B cell (primary cell): ENCODE measurements at regions of chrX and their contacts with region 1.

Region 1: DNA sequence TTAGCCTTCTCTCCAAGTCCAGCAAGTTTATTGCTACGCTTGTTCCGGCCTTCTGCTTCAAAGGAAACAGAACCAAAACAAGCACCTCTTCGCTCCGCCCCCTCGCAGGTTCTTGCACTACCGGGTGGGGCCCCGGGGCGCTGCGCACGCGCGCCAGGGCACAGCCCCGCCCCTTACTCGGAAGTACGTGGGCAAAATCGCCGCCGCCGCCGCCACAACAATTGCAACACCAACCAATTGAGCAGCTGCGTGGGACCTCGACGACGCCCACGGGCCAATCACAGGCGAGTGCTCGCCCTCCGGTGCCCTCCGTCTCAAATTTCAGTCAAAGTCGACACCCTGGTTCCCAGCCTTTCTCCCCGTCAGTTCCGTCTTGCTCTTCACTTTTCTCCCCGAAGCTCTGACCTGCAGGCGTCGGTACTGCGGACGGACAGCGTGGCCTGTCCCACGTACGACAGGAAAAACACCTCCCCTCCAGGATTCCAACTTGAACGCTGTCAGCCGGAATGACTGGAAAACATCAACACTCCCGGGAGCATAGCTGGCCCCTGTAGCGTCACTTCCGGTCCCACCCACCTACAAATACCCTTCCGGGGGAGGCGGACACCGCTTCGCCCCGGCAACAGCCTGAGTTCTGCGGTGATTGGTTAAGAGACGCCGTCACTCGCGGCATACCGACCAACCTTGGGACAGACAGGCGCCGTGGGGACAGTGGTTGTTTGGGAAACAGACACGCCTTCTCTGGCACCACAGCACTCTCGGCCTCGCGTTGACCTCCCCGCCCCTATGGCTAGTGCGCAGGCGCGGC is 624 bp upstream of the OTUD5 start:
- DNase-seq: peak; percentile 96
- ATAC-seq: peak; percentile 81
- H3K4me3 ChIP-seq: peak overlapping the region; percentile 8 to 75 (median 65)
- H3K4me3 Mint-ChIP-seq: peak overlapping the region; percentile 100
- H3K27ac ChIP-seq: peak overlapping the region; percentile 98 to 99
- H3K27ac Mint-ChIP-seq: peak overlapping the region; percentile 100
- H3K4me1 ChIP-seq: peaks cover 50 to 78% of the 10 kb centered on the region in 2 donors
- H3K4me1 Mint-ChIP-seq: peaks cover 61% of the 10 kb centered on the region
- H3K27me3 ChIP-seq: no peaks in the 10 kb centered on the region
- H3K27me3 Mint-ChIP-seq: no peaks in the 10 kb centered on the region
- CTCF ChIP-seq: no peak

Region 2: GRCh38 chrX:48468693-48469691 is 489.0 kb before region 1 on chrX:
- CTCF ChIA-PET with region 1: no interaction called
- POLR2A ChIA-PET with region 1: interaction called, 10 read pairs
- intact Hi-C with region 1: no loop called
- DNase-seq: peak; percentile 49
- ATAC-seq: peak; percentile 44
- H3K4me3 ChIP-seq: peak overlapping the region; percentile 38 to 74 (median 64)
- H3K4me3 Mint-ChIP-seq: peak overlapping the region; percentile 87
- H3K27ac ChIP-seq: peak overlapping the region in 1 of 2 donors; percentile 49
- H3K27ac Mint-ChIP-seq: peak overlapping the region; percentile 79
- H3K4me1 ChIP-seq: peaks cover 3 to 11% of the 10 kb centered on the region in 2 donors
- H3K4me1 Mint-ChIP-seq: peaks cover 16% of the 10 kb centered on the region
- H3K27me3 ChIP-seq: no peaks in the 10 kb centered on the region
- H3K27me3 Mint-ChIP-seq: no peaks in the 10 kb centered on the region
- CTCF ChIP-seq: peak; percentile 15

Region 3: GRCh38 chrX:48911412-48912182 is 46.4 kb before region 1 on chrX and contains the start of gene SLC35A2:
- CTCF ChIA-PET with region 1: interaction called, 4 read pairs
- POLR2A ChIA-PET with region 1: interaction called, 10 read pairs
- intact Hi-C with region 1: no loop called
- DNase-seq: peak; percentile 90
- ATAC-seq: peak; percentile 76
- H3K4me3 ChIP-seq: peak within 1 kb of the TSS; percentile 60 to 78 (median 66)
- H3K4me3 Mint-ChIP-seq: peak within 1 kb of the TSS; percentile 86
- H3K27ac ChIP-seq: peak within 1 kb of the TSS; percentile 86 to 90
- H3K27ac Mint-ChIP-seq: peak within 1 kb of the TSS; percentile 88
- H3K4me1 ChIP-seq: peaks cover 28 to 49% of the 10 kb centered on the region in 2 donors
- H3K4me1 Mint-ChIP-seq: peaks cover 48% of the 10 kb centered on the region
- H3K27me3 ChIP-seq: no peaks in the 10 kb centered on the region
- H3K27me3 Mint-ChIP-seq: no peaks in the 10 kb centered on the region
- CTCF ChIP-seq: no peak
- total RNA-seq, gene SLC35A2: 19.1 and 24.1 TPM in 2 replicates

Region 4: DNA sequence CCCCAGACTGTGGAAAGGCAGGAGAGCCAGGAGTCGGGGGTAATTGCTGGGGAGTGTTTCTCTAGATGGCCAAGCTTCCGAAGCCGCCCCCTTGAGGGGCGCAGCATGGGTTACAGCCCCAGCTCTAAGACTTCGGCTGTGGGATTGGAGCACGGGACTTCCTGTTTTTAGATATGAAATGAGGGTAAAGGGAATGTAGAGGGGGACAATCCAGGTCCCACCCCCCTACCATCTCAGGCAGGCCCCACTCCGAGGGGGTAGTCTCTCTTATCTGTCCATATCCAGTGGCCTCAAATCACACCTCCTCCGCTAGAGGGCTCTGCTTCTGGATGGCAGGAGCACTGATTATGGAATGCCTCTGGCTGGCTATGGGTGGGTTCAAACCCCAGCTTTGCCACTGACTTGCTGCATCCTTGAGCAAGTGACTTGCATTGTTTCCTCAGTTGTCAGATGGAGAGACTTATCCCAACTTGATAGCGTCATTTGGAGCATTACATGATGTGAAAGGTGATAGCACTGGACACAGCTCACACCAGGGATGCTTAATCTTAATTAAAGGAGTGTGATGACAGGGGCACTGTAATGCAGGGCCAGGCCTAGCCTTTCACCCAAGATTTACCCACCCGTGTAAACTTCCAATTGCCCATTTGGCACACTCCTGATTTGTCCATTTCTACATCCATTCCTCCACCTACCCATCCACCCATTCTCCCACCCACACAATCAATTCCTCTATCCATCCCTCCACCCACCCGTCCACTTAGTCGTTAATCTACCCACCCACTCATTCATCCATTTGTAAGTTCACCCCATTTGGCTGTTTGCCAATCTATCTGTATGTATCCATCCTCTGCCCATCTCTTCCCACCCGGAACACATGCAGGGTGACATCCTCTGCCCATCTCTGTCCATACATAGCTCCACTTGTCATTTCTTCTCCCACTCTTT is 14.5 kb after region 1 on chrX:
- CTCF ChIA-PET with region 1: interaction called, 10 read pairs
- POLR2A ChIA-PET with region 1: interaction called, 3 read pairs
- intact Hi-C with region 1: no loop called
- DNase-seq: peak; percentile 55
- ATAC-seq: peak; percentile 61
- H3K4me3 ChIP-seq: peak overlapping the region in 4 of 5 experiments; percentile 13 to 41 (median 28)
- H3K4me3 Mint-ChIP-seq: peak overlapping the region; percentile 66
- H3K27ac ChIP-seq: no peak overlapping the region
- H3K27ac Mint-ChIP-seq: peak overlapping the region; percentile 50
- H3K4me1 ChIP-seq: peaks cover 12 to 14% of the 10 kb centered on the region in 2 donors
- H3K4me1 Mint-ChIP-seq: peaks cover 15% of the 10 kb centered on the region
- H3K27me3 ChIP-seq: no peaks in the 10 kb centered on the region
- H3K27me3 Mint-ChIP-seq: no peaks in the 10 kb centered on the region
- CTCF ChIP-seq: peak; percentile 56

Region 5: GRCh38 chrX:49120099-49120498 is 162.1 kb after region 1 on chrX:
- CTCF ChIA-PET with region 1: no interaction called
- POLR2A ChIA-PET with region 1: no interaction called
- intact Hi-C with region 1: loop called (anchors 5 kb)
- DNase-seq: no peak
- ATAC-seq: no peak
- H3K4me3 ChIP-seq: no peak overlapping the region
- H3K4me3 Mint-ChIP-seq: peak overlapping the region; percentile 0
- H3K27ac ChIP-seq: no peak overlapping the region
- H3K27ac Mint-ChIP-seq: no peak overlapping the region
- H3K4me1 ChIP-seq: peaks cover 4 to 18% of the 10 kb centered on the region in 2 donors
- H3K4me1 Mint-ChIP-seq: peaks cover 29% of the 10 kb centered on the region
- H3K27me3 ChIP-seq: no peaks in the 10 kb centered on the region
- H3K27me3 Mint-ChIP-seq: no peaks in the 10 kb centered on the region
- CTCF ChIP-seq: no peak